Caco-2 (cell line): ENCODE measurements at regions of chr20 and their contacts with region 1.

Region 1: GRCh38 chr20:57388953-57389694 is 2.1 kb upstream of the RBM38 start:
- DNase-seq: peak; percentile 94 to 98
- H3K4me3 ChIP-seq: peak overlapping the region; percentile 24
- H3K4me3 Mint-ChIP-seq: peak overlapping the region; percentile 82
- H3K27ac Mint-ChIP-seq: peak overlapping the region; percentile 87
- H3K4me1 ChIP-seq: peaks cover 23% of the 10 kb centered on the region
- H3K4me1 Mint-ChIP-seq: peaks cover 23% of the 10 kb centered on the region
- H3K27me3 ChIP-seq: no peaks in the 10 kb centered on the region
- H3K27me3 Mint-ChIP-seq: no peaks in the 10 kb centered on the region
- CTCF ChIP-seq: peak; percentile 31 to 45

Region 2: DNA sequence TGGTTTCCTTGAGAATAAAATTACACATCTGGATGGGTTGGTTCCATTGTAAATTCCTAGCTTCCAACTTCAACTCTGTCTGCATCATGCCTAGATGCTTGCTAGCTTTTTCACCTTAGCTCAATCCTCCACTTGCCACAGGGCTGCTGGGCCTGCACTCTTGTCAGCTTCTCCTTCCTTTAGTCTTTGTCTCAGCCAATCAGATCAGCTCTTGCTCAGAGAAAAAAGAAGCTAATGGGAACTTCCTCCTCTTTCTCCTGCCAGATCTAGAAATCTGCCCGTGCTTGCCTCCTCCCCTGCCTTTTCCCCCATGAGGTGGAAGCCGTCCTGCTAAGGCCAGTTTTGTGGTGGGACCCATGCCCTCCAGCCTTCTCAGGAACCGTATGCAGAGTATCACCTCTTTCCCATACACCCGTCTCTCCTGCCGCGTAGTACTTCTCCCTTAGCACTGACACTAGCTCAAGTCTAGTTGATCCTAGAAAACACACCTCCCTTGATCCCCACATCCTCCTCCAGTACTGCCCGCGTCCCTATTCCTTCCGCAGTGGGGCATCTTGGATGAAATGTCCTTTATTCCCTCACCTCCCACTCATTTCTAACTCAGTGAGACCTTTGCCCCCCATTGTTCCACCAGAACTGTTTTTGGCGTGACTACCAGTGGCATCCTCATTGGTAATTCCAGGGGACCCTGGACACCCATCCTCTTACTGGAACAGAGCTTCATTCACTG is 19.4 kb before region 1 on chr20:
- CTCF ChIA-PET with region 1: no interaction called
- POLR2A ChIA-PET with region 1: interaction called, 11 read pairs
- intact Hi-C with region 1: no loop called
- DNase-seq: peak in 1 of 2 experiments; percentile 34
- H3K4me3 ChIP-seq: no peak overlapping the region
- H3K4me3 Mint-ChIP-seq: no peak overlapping the region
- H3K27ac Mint-ChIP-seq: no peak overlapping the region
- H3K4me1 ChIP-seq: no peaks in the 10 kb centered on the region
- H3K4me1 Mint-ChIP-seq: no peaks in the 10 kb centered on the region
- H3K27me3 ChIP-seq: no peaks in the 10 kb centered on the region
- H3K27me3 Mint-ChIP-seq: no peaks in the 10 kb centered on the region
- CTCF ChIP-seq: no peak

Region 3: DNA sequence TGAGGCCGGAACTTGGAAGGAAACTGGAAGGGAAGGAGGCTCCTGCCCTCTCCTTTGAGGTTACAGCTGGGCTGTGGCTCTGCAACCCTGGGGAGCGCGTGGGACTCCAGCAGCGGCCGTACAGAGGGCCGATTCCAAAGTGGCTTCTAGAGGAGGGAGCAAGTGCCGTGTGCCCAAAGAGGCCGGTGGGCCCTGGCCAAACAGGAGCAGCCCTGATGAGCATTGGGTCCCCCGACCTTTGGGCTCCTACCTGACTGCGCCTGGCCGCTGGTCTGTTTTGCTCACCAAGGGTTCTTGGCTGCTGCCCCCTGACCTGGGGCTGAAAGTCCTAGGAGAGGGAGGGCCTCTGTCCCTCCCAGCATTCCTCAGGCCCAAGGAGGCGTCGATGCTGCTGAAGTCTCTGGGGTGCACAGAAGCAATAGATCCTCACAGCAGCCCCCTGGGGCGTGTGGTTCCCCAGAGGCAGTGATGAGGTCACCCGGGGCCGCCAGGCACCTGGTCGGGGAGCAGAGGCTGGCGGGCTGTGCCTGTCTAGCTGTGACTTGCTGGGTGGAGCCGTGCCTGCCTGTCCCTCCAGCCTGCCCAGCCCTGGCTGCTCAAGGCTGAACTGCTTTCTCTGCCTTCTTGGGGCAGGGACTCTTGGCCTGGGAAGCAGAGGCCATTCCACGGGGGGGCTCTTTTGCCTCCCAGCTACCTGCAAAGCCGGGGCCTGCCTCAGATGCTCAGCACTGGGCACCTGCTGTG is 11.9 kb after region 1 on chr20:
- CTCF ChIA-PET with region 1: no interaction called
- POLR2A ChIA-PET with region 1: no interaction called
- intact Hi-C with region 1: no loop called
- DNase-seq: no peak
- H3K4me3 ChIP-seq: no peak overlapping the region
- H3K4me3 Mint-ChIP-seq: no peak overlapping the region
- H3K27ac Mint-ChIP-seq: no peak overlapping the region
- H3K4me1 ChIP-seq: no peaks in the 10 kb centered on the region
- H3K4me1 Mint-ChIP-seq: no peaks in the 10 kb centered on the region
- H3K27me3 ChIP-seq: no peaks in the 10 kb centered on the region
- H3K27me3 Mint-ChIP-seq: no peaks in the 10 kb centered on the region
- CTCF ChIP-seq: no peak

Region 4: GRCh38 chr20:57420531-57421252 is 31.6 kb after region 1 on chr20:
- CTCF ChIA-PET with region 1: interaction called, 3 read pairs
- POLR2A ChIA-PET with region 1: no interaction called
- intact Hi-C with region 1: loop called (anchors 5 kb)
- DNase-seq: no peak
- H3K4me3 ChIP-seq: no peak overlapping the region
- H3K4me3 Mint-ChIP-seq: no peak overlapping the region
- H3K27ac Mint-ChIP-seq: no peak overlapping the region
- H3K4me1 ChIP-seq: no peaks in the 10 kb centered on the region
- H3K4me1 Mint-ChIP-seq: no peaks in the 10 kb centered on the region
- H3K27me3 ChIP-seq: peaks cover 1% of the 10 kb centered on the region
- H3K27me3 Mint-ChIP-seq: peaks cover 10% of the 10 kb centered on the region
- CTCF ChIP-seq: no peak

Region 5: GRCh38 chr20:57432874-57433491 is 43.9 kb after region 1 on chr20:
- CTCF ChIA-PET with region 1: interaction called, 3 read pairs
- POLR2A ChIA-PET with region 1: interaction called, 10 read pairs
- intact Hi-C with region 1: no loop called
- DNase-seq: peak in 1 of 2 experiments; percentile 40
- H3K4me3 ChIP-seq: no peak overlapping the region
- H3K4me3 Mint-ChIP-seq: no peak overlapping the region
- H3K27ac Mint-ChIP-seq: no peak overlapping the region
- H3K4me1 ChIP-seq: peaks cover 7% of the 10 kb centered on the region; the same call in 1 of the 2 replicates
- H3K4me1 Mint-ChIP-seq: no peaks in the 10 kb centered on the region
- H3K27me3 ChIP-seq: no peaks in the 10 kb centered on the region; the same call in 1 of the 2 replicates
- H3K27me3 Mint-ChIP-seq: peaks cover 12% of the 10 kb centered on the region
- CTCF ChIP-seq: no peak